AG04449 (cell line): ENCODE measurements at regions of chr5 and their contacts with region 1.

Region 1: DNA sequence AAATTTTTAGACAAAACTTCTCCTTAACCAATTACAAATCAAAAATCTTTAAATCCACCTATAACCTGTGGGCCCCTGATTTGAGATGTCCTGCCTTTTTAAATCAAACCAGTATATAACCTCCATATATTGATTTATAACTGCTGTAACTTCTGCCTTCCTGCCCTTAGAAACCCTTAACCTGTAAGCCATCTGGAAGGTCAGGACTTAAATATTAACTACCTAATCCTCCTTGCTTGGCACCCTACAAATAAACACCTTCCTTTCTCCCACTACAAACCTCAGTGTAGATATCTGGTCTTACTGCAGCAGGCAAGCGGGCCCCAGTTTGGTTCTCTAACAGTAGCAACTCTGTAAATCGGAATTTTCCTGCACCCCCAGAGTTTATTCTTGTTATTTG is 83.9 kb downstream of the MTREX start:
- DNase-seq: no peak
- H3K4me3 ChIP-seq: no peak overlapping the region
- CTCF ChIP-seq: no peak

Region 2: DNA sequence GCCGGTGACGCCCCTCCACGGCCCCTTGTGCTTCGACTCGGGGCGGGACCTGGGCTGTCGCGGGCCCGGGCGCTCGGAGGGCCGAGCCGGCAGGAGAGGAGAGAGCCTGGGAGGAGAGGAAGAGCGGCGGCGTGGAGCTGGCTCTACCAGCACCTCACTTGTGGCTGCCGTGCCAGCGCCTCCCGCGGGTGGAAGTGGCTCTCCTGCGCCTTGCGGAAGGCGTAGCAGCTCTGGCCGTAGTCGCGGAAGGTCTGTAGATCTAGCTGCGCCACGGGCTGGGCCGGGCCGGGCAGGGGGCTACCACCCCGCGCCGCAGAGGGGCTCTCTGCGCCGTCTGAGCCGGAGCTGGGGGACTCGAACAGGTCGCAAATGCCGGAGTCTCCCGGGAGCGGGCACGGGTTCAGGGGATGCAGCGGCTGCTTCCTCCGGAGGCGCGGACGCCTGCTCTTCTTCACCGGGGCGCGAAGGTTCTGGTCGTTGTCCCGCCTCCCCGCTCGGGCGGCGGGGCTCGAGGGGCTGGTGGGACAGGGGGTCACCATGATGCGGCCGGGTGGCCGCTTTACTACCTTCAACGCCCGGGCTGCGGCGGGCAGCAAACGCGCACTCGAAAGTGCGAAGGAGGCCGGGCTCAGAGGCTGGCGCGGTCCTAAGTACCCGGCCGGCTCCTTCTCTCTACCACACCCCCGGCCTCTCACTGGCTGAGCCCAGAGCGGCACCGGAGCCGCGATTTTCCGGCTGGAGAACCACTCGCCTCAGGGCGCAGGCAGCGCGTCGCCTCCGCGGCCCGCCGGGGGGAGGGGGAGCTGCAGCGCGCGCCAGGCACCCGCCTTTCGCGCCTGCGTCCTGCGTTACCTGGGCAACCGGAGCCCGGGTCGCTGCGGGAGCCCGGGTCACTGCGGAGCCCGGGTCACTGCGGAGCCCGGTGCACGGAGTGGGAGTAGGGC is 158.4 kb before region 1 on chr5 and contains the start of gene CCNO:
- CTCF ChIA-PET with region 1: no interaction called
- POLR2A ChIA-PET with region 1: no interaction called
- DNase-seq: no peak
- H3K4me3 ChIP-seq: peak within 1 kb of the TSS; percentile 54
- CTCF ChIP-seq: peak; percentile 3

Region 3: DNA sequence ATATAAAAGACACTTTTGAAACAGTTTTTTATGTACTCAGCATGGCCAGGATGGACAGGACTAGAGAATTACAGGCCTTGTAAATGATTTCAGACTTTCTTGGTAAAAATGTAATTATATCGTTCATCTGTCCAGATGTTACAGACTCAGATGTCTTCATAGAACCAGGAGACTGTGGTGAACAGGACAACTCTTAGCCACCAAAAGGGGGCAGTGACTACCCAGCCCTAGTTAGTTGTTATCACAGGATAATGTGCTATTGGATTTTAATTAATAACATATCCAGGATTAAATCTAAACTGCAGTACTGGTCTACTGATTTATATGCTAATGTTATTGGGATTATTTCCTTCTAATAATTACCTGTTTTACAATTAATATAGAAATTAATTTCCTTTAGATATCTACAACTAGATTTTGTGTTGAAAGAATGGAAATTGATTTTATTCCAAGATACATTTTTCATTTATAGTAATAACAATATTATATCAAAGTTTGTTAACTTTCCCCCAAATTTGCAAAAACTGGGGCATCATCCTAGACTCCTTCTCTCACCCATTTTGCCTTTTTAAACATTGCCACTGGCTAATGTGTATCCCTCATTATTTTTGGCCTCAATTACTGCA is 15.5 kb after region 1 on chr5:
- CTCF ChIA-PET with region 1: interaction called, 16 read pairs
- POLR2A ChIA-PET with region 1: interaction called, 4 read pairs
- DNase-seq: no peak
- H3K4me3 ChIP-seq: no peak overlapping the region
- CTCF ChIP-seq: peak; percentile 66